Sigmoid colon (tissue), 7 donors: ENCODE measurements at regions of chr21 and their contacts with region 1.

Region 1: GRCh38 chr21:27306791-27307775 is 340.2 kb upstream of the ADAMTS5 start:
- DNase-seq: no peak
- H3K4me3 ChIP-seq: no peak overlapping the region
- H3K27ac ChIP-seq: peak overlapping the region in 1 of 4 donors; percentile 33
- H3K4me1 ChIP-seq: peaks cover 0 to 10% (median 8%) of the 10 kb centered on the region in 4 donors
- H3K27me3 ChIP-seq: no peaks in the 10 kb centered on the region
- CTCF ChIP-seq: no peak
- EP300 ChIP-seq: no peak
- POLR2A ChIP-seq: no peak

Region 2: GRCh38 chr21:27406300-27407009 is 99.4 kb after region 1 on chr21:
- intact Hi-C with region 1: loop called (anchors 10 kb)
- DNase-seq: no peak
- H3K4me3 ChIP-seq: no peak overlapping the region
- H3K27ac ChIP-seq: peak overlapping the region in 3 of 4 donors; percentile 6 to 38 (median 10)
- H3K4me1 ChIP-seq: peaks cover 0 to 10% (median 9%) of the 10 kb centered on the region in 4 donors
- H3K27me3 ChIP-seq: no peaks in the 10 kb centered on the region
- CTCF ChIP-seq: no peak
- EP300 ChIP-seq: no peak
- POLR2A ChIP-seq: no peak